OCI-LY7 (cell line): ENCODE measurements at regions of chr4 and their contacts with region 1.

Region 1: GRCh38 chr4:101158134-101158482 is 189.2 kb downstream of the PPP3CA start:
- DNase-seq: no peak
- H3K4me3 ChIP-seq: no peak overlapping the region
- H3K27ac ChIP-seq: no peak overlapping the region
- H3K4me1 ChIP-seq: peaks cover 16% of the 10 kb centered on the region
- CTCF ChIP-seq: no peak

Region 2: DNA sequence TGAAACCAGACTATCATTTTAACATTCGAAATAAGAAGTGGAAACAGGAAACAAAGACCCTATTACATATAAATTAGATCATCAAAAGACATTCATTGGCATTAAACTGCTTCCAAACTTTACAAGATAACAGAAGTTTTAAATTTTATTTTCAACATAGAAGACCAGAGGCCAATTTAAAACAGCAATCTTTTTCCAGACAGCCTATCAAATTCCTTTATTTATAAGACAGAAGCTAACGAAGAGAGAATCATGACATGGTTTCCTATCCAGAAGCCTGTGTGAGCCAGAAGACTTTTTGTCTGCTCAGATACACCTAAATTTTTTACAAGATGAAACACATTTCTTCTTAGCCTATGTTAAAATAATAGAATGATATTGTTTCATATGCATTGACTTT is 102.7 kb before region 1 on chr4:
- CTCF ChIA-PET with region 1: no interaction called
- POLR2A ChIA-PET with region 1: interaction called, 11 read pairs
- intact Hi-C with region 1: no loop called
- DNase-seq: no peak
- H3K4me3 ChIP-seq: no peak overlapping the region
- H3K27ac ChIP-seq: no peak overlapping the region
- H3K4me1 ChIP-seq: no peaks in the 10 kb centered on the region
- CTCF ChIP-seq: no peak

Region 3: DNA sequence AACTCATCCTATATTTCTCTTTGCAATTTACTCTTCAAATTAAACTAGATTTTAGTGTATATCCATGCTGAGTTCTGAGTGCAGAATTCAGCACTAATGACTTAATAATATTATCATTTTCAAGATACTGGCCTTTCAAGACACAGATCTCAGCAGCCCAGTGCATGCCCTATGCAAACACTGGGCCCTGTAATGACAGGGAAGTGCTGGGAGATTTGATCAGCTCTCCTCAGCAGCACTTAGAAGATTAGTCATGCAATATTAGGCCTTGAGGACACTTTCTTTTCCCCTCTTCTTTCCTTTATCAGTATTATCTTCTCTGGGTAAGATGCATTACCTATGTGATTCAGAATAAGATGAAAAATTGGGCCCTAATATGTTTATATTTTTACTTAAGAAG is 17.9 kb before region 1 on chr4:
- CTCF ChIA-PET with region 1: no interaction called
- POLR2A ChIA-PET with region 1: no interaction called
- intact Hi-C with region 1: no loop called
- DNase-seq: no peak
- H3K4me3 ChIP-seq: no peak overlapping the region
- H3K27ac ChIP-seq: no peak overlapping the region
- H3K4me1 ChIP-seq: peaks cover 43% of the 10 kb centered on the region
- CTCF ChIP-seq: no peak